Naive thymus-derived CD4-positive, alpha-beta T cell (primary cell): ENCODE measurements at regions of chr14 and their contacts with region 1.

Region 1: GRCh38 chr14:39229222-39229543 is 4.5 kb upstream of the MIA2 start:
- DNase-seq: peak in 8 of 9 donors; percentile 31 to 65 (median 54)
- ATAC-seq: peak; percentile 79
- H3K4me3 ChIP-seq: no peak overlapping the region
- H3K4me3 Mint-ChIP-seq: peak overlapping the region in 7 of 10 donors; percentile 3 to 58 (median 29)
- H3K27ac ChIP-seq: no peak overlapping the region
- H3K27ac Mint-ChIP-seq: peak overlapping the region; percentile 60 to 95 (median 84)
- H3K4me1 ChIP-seq: peaks cover 19 to 40% of the 10 kb centered on the region in 2 donors
- H3K4me1 Mint-ChIP-seq: peaks cover 20 to 52% (median 35%) of the 10 kb centered on the region in 7 donors
- H3K27me3 ChIP-seq: no peaks in the 10 kb centered on the region
- H3K27me3 Mint-ChIP-seq: no peaks in the 10 kb centered on the region

Region 2: GRCh38 chr14:39114073-39114838 is 114.9 kb before region 1 on chr14 and contains the start of gene GEMIN2:
- CTCF ChIA-PET with region 1: interaction called, 6 read pairs
- POLR2A ChIA-PET with region 1: no interaction called
- intact Hi-C with region 1: loop called in 1 of 2 experiments (anchors 1 kb)
- DNase-seq: peak; percentile 88 to 95 (median 92)
- ATAC-seq: peak; percentile 99
- H3K4me3 ChIP-seq: peak within 1 kb of the TSS; percentile 68
- H3K4me3 Mint-ChIP-seq: peak within 1 kb of the TSS; percentile 89 to 99 (median 97)
- H3K27ac ChIP-seq: peak within 1 kb of the TSS; percentile 80
- H3K27ac Mint-ChIP-seq: peak within 1 kb of the TSS; percentile 81 to 98 (median 94)
- H3K4me1 ChIP-seq: peaks cover 12 to 13% of the 10 kb centered on the region in 2 donors
- H3K4me1 Mint-ChIP-seq: peaks cover 10 to 36% (median 24%) of the 10 kb centered on the region in 7 donors
- H3K27me3 ChIP-seq: no peaks in the 10 kb centered on the region
- H3K27me3 Mint-ChIP-seq: peaks cover 0 to 3% (median 0%) of the 10 kb centered on the region in 5 donors
- total RNA-seq, gene GEMIN2: 7.2 to 20.9 (median 18.6) TPM

Region 3: GRCh38 chr14:39174560-39175444 is 54.4 kb before region 1 on chr14 and contains the start of gene PNN:
- CTCF ChIA-PET with region 1: no interaction called
- POLR2A ChIA-PET with region 1: interaction called, 6 read pairs
- intact Hi-C with region 1: loop called (anchors 1 kb)
- DNase-seq: peak; percentile 83 to 99 (median 98)
- ATAC-seq: peak; percentile 94
- H3K4me3 ChIP-seq: peak within 1 kb of the TSS; percentile 80
- H3K4me3 Mint-ChIP-seq: peak within 1 kb of the TSS; percentile 95 to 100 (median 99)
- H3K27ac ChIP-seq: peak within 1 kb of the TSS; percentile 90
- H3K27ac Mint-ChIP-seq: peak within 1 kb of the TSS; percentile 96 to 100 (median 99)
- H3K4me1 ChIP-seq: peaks cover 16 to 28% of the 10 kb centered on the region in 2 donors
- H3K4me1 Mint-ChIP-seq: peaks cover 27 to 74% (median 50%) of the 10 kb centered on the region in 7 donors
- H3K27me3 ChIP-seq: no peaks in the 10 kb centered on the region
- H3K27me3 Mint-ChIP-seq: no peaks in the 10 kb centered on the region
- total RNA-seq, gene PNN: 80.1 to 120 (median 102) TPM

Region 4: GRCh38 chr14:39203659-39204606 is 25.2 kb before region 1 on chr14:
- CTCF ChIA-PET with region 1: no interaction called
- POLR2A ChIA-PET with region 1: interaction called, 3 read pairs
- intact Hi-C with region 1: loop called in 1 of 2 experiments (anchors 2 kb)
- DNase-seq: no peak
- ATAC-seq: no peak
- H3K4me3 ChIP-seq: no peak overlapping the region
- H3K4me3 Mint-ChIP-seq: no peak overlapping the region
- H3K27ac ChIP-seq: no peak overlapping the region
- H3K27ac Mint-ChIP-seq: peak overlapping the region in 3 of 9 donors; percentile 19 to 52 (median 21)
- H3K4me1 ChIP-seq: no peaks in the 10 kb centered on the region
- H3K4me1 Mint-ChIP-seq: peaks cover 11 to 25% (median 19%) of the 10 kb centered on the region in 7 donors
- H3K27me3 ChIP-seq: no peaks in the 10 kb centered on the region
- H3K27me3 Mint-ChIP-seq: no peaks in the 10 kb centered on the region

Region 5: DNA sequence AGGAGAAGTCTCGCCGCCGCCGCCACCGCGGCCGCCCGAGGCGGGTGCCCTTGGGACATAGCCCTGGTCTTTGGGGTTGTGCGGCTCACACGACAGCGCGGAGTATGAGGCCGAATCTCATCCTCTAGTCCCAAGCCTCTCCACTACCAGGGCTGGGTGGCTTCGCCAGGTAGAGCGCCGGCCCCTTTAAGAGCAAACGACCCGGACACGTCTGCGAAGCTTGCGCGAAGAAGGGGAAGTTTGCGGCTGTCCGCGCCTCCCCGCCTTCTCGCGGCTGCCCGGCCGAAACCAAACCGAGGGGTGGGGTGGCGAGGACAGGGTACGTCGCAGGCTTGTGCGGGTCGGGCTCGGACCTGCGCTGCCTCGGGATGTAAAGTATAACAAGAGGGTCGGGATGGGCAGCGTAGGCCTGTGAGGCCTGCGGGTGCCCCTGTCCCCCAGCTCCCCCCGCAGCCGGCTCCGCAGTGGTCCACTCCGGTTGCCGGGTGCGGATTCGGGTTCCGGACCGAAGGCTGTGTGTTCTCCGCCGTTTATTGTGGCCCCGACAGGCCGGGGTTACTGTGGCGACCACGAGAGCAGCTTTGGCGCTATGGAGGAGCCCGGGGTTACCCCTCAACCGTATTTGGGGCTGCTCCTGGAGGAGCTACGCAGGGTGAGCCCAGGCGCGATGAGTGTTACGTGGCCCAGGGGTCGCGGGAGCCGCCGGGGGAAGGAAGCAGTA is 37.8 kb after region 1 on chr14:
- CTCF ChIA-PET with region 1: no interaction called
- POLR2A ChIA-PET with region 1: interaction called, 9 read pairs
- intact Hi-C with region 1: loop called (anchors 1 kb)
- DNase-seq: peak; percentile 65 to 77 (median 71)
- ATAC-seq: peak; percentile 87
- H3K4me3 ChIP-seq: peak overlapping the region; percentile 86
- H3K4me3 Mint-ChIP-seq: peak overlapping the region; percentile 76 to 100 (median 95)
- H3K27ac ChIP-seq: peak overlapping the region; percentile 94
- H3K27ac Mint-ChIP-seq: peak overlapping the region; percentile 88 to 98 (median 96)
- H3K4me1 ChIP-seq: peaks cover 17 to 29% of the 10 kb centered on the region in 2 donors
- H3K4me1 Mint-ChIP-seq: peaks cover 47 to 62% (median 58%) of the 10 kb centered on the region in 7 donors
- H3K27me3 ChIP-seq: no peaks in the 10 kb centered on the region
- H3K27me3 Mint-ChIP-seq: no peaks in the 10 kb centered on the region

Region 6: GRCh38 chr14:39302124-39302810 is 73.1 kb after region 1 on chr14:
- CTCF ChIA-PET with region 1: no interaction called
- POLR2A ChIA-PET with region 1: no interaction called
- intact Hi-C with region 1: no loop called
- DNase-seq: no peak
- ATAC-seq: no peak
- H3K4me3 ChIP-seq: no peak overlapping the region
- H3K4me3 Mint-ChIP-seq: no peak overlapping the region
- H3K27ac ChIP-seq: no peak overlapping the region
- H3K27ac Mint-ChIP-seq: no peak overlapping the region
- H3K4me1 ChIP-seq: no peaks in the 10 kb centered on the region
- H3K4me1 Mint-ChIP-seq: peaks cover 0 to 5% (median 2%) of the 10 kb centered on the region in 7 donors
- H3K27me3 ChIP-seq: no peaks in the 10 kb centered on the region
- H3K27me3 Mint-ChIP-seq: no peaks in the 10 kb centered on the region

Region 7: GRCh38 chr14:39368261-39368959 is 139.2 kb after region 1 on chr14:
- CTCF ChIA-PET with region 1: no interaction called
- POLR2A ChIA-PET with region 1: interaction called, 3 read pairs
- intact Hi-C with region 1: loop called in 1 of 2 experiments (anchors 1 kb)
- DNase-seq: peak in 2 of 9 donors; percentile 4 to 15
- ATAC-seq: no peak
- H3K4me3 ChIP-seq: no peak overlapping the region
- H3K4me3 Mint-ChIP-seq: no peak overlapping the region
- H3K27ac ChIP-seq: no peak overlapping the region
- H3K27ac Mint-ChIP-seq: peak overlapping the region in 3 of 9 donors; percentile 3 to 43 (median 13)
- H3K4me1 ChIP-seq: no peaks in the 10 kb centered on the region
- H3K4me1 Mint-ChIP-seq: peaks cover 0 to 15% (median 4%) of the 10 kb centered on the region in 7 donors
- H3K27me3 ChIP-seq: no peaks in the 10 kb centered on the region
- H3K27me3 Mint-ChIP-seq: no peaks in the 10 kb centered on the region

Region 8: GRCh38 chr14:39426605-39427004 is 197.4 kb after region 1 on chr14:
- CTCF ChIA-PET with region 1: interaction called, 7 read pairs
- POLR2A ChIA-PET with region 1: interaction called, 5 read pairs
- intact Hi-C with region 1: loop called (anchors 1 kb)
- DNase-seq: peak in 2 of 9 donors; percentile 22 to 25
- ATAC-seq: peak; percentile 34
- H3K4me3 ChIP-seq: no peak overlapping the region
- H3K4me3 Mint-ChIP-seq: peak overlapping the region; percentile 0 to 100 (median 58)
- H3K27ac ChIP-seq: no peak overlapping the region
- H3K27ac Mint-ChIP-seq: peak overlapping the region in 4 of 9 donors; percentile 9 to 76 (median 48)
- H3K4me1 ChIP-seq: peaks cover 31 to 52% of the 10 kb centered on the region in 2 donors
- H3K4me1 Mint-ChIP-seq: peaks cover 55 to 94% (median 84%) of the 10 kb centered on the region in 7 donors
- H3K27me3 ChIP-seq: no peaks in the 10 kb centered on the region
- H3K27me3 Mint-ChIP-seq: no peaks in the 10 kb centered on the region